GM12878 (cell line): ENCODE measurements at regions of chr2 and their contacts with region 1.

Region 1: GRCh38 chr2:80499095-80499494 is 194.5 kb upstream of the LRRTM1 start:
- DNase-seq: no peak
- ATAC-seq: peak; percentile 77
- H3K4me3 ChIP-seq: no peak overlapping the region
- H3K27ac ChIP-seq: no peak overlapping the region
- H3K4me1 ChIP-seq: no peaks in the 10 kb centered on the region
- H3K27me3 ChIP-seq: no peaks in the 10 kb centered on the region
- CTCF ChIP-seq: peak; percentile 55 to 79 (median 67)
- EP300 ChIP-seq: no peak
- POLR2A ChIP-seq: no peak
- RAD21 ChIP-seq: peak; percentile 80

Region 2: GRCh38 chr2:80238692-80239469 is 260.2 kb before region 1 on chr2:
- CTCF ChIA-PET with region 1: interaction called, 4 read pairs
- POLR2A ChIA-PET with region 1: no interaction called
- RAD21 ChIA-PET with region 1: interaction called, 10 read pairs
- SMC1A ChIA-PET with region 1: no interaction called
- in situ Hi-C with region 1: no loop called
- intact Hi-C with region 1: no loop called
- DNase-seq: no peak
- ATAC-seq: peak; percentile 69
- H3K4me3 ChIP-seq: no peak overlapping the region
- H3K27ac ChIP-seq: no peak overlapping the region
- H3K4me1 ChIP-seq: no peaks in the 10 kb centered on the region
- H3K27me3 ChIP-seq: no peaks in the 10 kb centered on the region
- CTCF ChIP-seq: peak; percentile 49 to 80 (median 78)
- EP300 ChIP-seq: no peak
- POLR2A ChIP-seq: no peak
- RAD21 ChIP-seq: peak; percentile 16; the same call in 1 of the 2 replicates

Region 3: DNA sequence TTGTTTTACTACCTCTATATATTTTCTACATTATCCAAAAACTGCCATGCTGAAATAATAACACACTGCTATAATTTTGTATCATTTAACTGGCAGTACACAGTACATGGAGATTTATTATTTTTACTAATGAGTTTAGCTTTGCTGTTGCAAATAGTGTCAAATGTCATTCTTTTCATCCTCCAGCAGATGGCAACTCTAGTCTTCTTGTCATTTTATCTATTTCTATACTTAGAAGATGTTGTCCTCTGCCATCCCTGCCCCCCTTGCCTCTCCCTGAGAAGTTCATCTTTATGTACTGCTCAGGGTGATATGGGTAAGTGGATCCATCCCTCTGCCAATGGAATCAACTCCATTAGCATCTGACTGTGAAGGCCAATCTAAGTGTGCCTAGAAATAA is 172.9 kb before region 1 on chr2:
- CTCF ChIA-PET with region 1: interaction called, 440 read pairs
- POLR2A ChIA-PET with region 1: interaction called, 17 read pairs
- RAD21 ChIA-PET with region 1: interaction called, 385 read pairs
- SMC1A ChIA-PET with region 1: interaction called, 530 read pairs
- in situ Hi-C with region 1: loop called (anchors 5 kb)
- intact Hi-C with region 1: loop called (anchors 1 kb)
- DNase-seq: peak; percentile 17
- ATAC-seq: peak; percentile 75
- H3K4me3 ChIP-seq: no peak overlapping the region
- H3K27ac ChIP-seq: no peak overlapping the region
- H3K4me1 ChIP-seq: no peaks in the 10 kb centered on the region; the same call in 1 of the 2 replicates
- H3K27me3 ChIP-seq: peaks cover 0 to 6% of the 10 kb centered on the region in 2 experiments; a peak in 2 of 4 replicates
- CTCF ChIP-seq: peak; percentile 33 to 65 (median 43); a peak in 4 of 6 replicates
- EP300 ChIP-seq: no peak
- POLR2A ChIP-seq: no peak
- RAD21 ChIP-seq: peak; percentile 64

Region 4: GRCh38 chr2:80429251-80429650 is 69.8 kb before region 1 on chr2:
- CTCF ChIA-PET with region 1: no interaction called
- POLR2A ChIA-PET with region 1: no interaction called
- RAD21 ChIA-PET with region 1: interaction called, 12 read pairs
- SMC1A ChIA-PET with region 1: interaction called, 4 read pairs
- in situ Hi-C with region 1: no loop called
- intact Hi-C with region 1: no loop called
- DNase-seq: no peak
- ATAC-seq: no peak
- H3K4me3 ChIP-seq: no peak overlapping the region
- H3K27ac ChIP-seq: no peak overlapping the region
- H3K4me1 ChIP-seq: no peaks in the 10 kb centered on the region
- H3K27me3 ChIP-seq: no peaks in the 10 kb centered on the region
- CTCF ChIP-seq: no peak
- EP300 ChIP-seq: no peak
- POLR2A ChIP-seq: no peak
- RAD21 ChIP-seq: no peak

Region 5: GRCh38 chr2:80473796-80474195 is 25.3 kb before region 1 on chr2:
- CTCF ChIA-PET with region 1: interaction called, 50 read pairs
- POLR2A ChIA-PET with region 1: interaction called, 319 read pairs
- RAD21 ChIA-PET with region 1: interaction called, 556 read pairs
- SMC1A ChIA-PET with region 1: interaction called, 559 read pairs
- in situ Hi-C with region 1: no loop called
- intact Hi-C with region 1: no loop called
- DNase-seq: no peak
- ATAC-seq: 0 out of 3 replicates have a peak, but pooled peaks have one; percentile 11
- H3K4me3 ChIP-seq: no peak overlapping the region
- H3K27ac ChIP-seq: no peak overlapping the region; the same call in 1 of the 2 replicates
- H3K4me1 ChIP-seq: peaks cover 8% of the 10 kb centered on the region
- H3K27me3 ChIP-seq: no peaks in the 10 kb centered on the region
- CTCF ChIP-seq: no peak
- EP300 ChIP-seq: no peak
- POLR2A ChIP-seq: no peak
- RAD21 ChIP-seq: no peak

Region 6: DNA sequence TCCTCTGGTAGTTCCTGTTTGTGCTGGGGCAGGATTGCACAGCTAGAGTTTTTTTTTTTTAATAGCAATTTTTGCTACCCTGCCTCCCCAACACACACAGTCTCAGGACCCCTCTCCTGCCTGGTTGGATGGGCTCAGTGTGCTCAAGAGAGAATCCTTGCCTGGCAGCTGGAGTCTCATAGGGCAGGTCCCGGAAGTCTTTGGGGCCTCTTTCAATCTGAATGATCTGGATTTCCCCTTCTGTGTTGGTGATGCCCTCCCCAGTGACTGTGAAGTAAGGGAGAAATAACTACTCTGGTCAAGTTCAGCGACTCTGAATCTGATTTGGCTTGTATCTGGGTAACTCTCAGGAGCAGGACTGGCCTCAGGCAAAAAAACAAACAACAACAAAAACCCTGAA is 26.1 kb after region 1 on chr2:
- CTCF ChIA-PET with region 1: interaction called, 243 read pairs
- POLR2A ChIA-PET with region 1: interaction called, 36 read pairs
- RAD21 ChIA-PET with region 1: interaction called, 276 read pairs
- SMC1A ChIA-PET with region 1: interaction called, 360 read pairs
- in situ Hi-C with region 1: no loop called
- intact Hi-C with region 1: no loop called
- DNase-seq: peak; percentile 83
- ATAC-seq: peak; percentile 77
- H3K4me3 ChIP-seq: 0 out of 2 replicates have a peak overlapping the region, but pooled peaks have one; percentile 19
- H3K27ac ChIP-seq: peak overlapping the region; percentile 92
- H3K4me1 ChIP-seq: peaks cover 48% of the 10 kb centered on the region
- H3K27me3 ChIP-seq: no peaks in the 10 kb centered on the region
- CTCF ChIP-seq: no peak
- EP300 ChIP-seq: peak; percentile 57 to 76; a peak in 3 of 4 replicates
- POLR2A ChIP-seq: 0 out of 2 replicates have a peak, but pooled peaks have one; percentile 23
- RAD21 ChIP-seq: no peak

Region 7: GRCh38 chr2:80655265-80655664 is 156.2 kb after region 1 on chr2:
- CTCF ChIA-PET with region 1: no interaction called
- POLR2A ChIA-PET with region 1: no interaction called
- RAD21 ChIA-PET with region 1: no interaction called
- SMC1A ChIA-PET with region 1: no interaction called
- in situ Hi-C with region 1: no loop called
- intact Hi-C with region 1: no loop called
- DNase-seq: no peak
- ATAC-seq: no peak
- H3K4me3 ChIP-seq: no peak overlapping the region
- H3K27ac ChIP-seq: no peak overlapping the region
- H3K4me1 ChIP-seq: no peaks in the 10 kb centered on the region
- H3K27me3 ChIP-seq: no peaks in the 10 kb centered on the region
- CTCF ChIP-seq: no peak
- EP300 ChIP-seq: no peak
- POLR2A ChIP-seq: no peak
- RAD21 ChIP-seq: no peak

Region 8: DNA sequence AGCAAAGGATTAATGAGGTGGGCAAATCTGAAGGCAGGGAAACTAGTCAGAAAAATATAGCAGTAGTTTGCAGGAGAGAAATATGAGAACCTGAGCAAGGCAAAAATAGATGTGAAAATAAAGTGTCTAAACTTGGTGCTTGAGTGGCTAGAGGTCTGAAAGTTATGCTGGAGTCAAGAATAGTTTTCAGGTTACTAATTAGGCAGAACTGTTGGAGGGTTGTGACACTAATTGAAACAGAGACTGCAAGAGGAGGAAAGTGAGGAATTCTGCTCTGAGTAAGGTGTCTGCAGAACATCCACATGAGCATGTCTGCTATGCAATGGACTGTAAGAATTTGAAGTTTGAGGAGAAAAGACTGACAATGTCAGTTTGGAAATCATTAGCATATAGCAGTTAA is 249.5 kb after region 1 on chr2:
- CTCF ChIA-PET with region 1: no interaction called
- POLR2A ChIA-PET with region 1: no interaction called
- RAD21 ChIA-PET with region 1: no interaction called
- SMC1A ChIA-PET with region 1: no interaction called
- in situ Hi-C with region 1: no loop called
- intact Hi-C with region 1: no loop called
- DNase-seq: peak; percentile 41
- ATAC-seq: peak; percentile 55
- H3K4me3 ChIP-seq: no peak overlapping the region
- H3K27ac ChIP-seq: no peak overlapping the region
- H3K4me1 ChIP-seq: no peaks in the 10 kb centered on the region
- H3K27me3 ChIP-seq: no peaks in the 10 kb centered on the region
- CTCF ChIP-seq: no peak
- EP300 ChIP-seq: no peak
- POLR2A ChIP-seq: no peak
- RAD21 ChIP-seq: no peak